Heart left ventricle (tissue), 16 donors: ENCODE measurements at regions of chr17 and their contacts with region 1.

Region 1: GRCh38 chr17:30600049-30600829 is 123.0 kb downstream of the GOSR1 start:
- DNase-seq: peak; percentile 84 to 91 (median 88)
- ATAC-seq: peak; percentile 95 to 99 (median 99)
- H3K4me3 ChIP-seq: peak overlapping the region; percentile 72 to 95 (median 84)
- H3K27ac ChIP-seq: peak overlapping the region; percentile 81 to 99 (median 96)
- H3K4me1 ChIP-seq: peaks cover 0 to 18% (median 6%) of the 10 kb centered on the region in 12 donors
- H3K27me3 ChIP-seq: no peaks in the 10 kb centered on the region
- CTCF ChIP-seq: peak in 11 of 12 donors; percentile 18 to 62 (median 40)
- POLR2A ChIP-seq: peak in 1 of 2 donors; percentile 73

Region 2: DNA sequence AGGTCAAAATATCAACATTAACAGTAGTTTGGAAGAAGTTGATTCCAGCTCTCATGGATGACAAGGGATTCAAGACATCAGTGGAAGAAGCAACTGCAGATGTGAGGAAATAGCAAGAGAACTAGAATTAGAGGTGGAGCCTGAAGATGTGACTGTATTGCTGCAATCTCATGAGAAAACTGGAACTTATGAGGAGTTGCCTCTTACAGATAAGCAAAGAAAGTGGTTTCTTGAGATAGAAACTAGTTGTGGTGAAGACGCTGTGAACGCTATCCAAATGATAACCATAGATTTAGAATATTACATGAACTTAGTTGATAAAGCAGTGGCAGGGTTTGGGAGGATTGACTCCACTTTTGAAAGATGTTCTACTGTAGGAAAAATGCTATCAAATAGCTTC is 55.2 kb before region 1 on chr17:
- intact Hi-C with region 1: no loop called
- DNase-seq: no peak
- ATAC-seq: no peak
- H3K4me3 ChIP-seq: no peak overlapping the region
- H3K27ac ChIP-seq: no peak overlapping the region
- H3K4me1 ChIP-seq: no peaks in the 10 kb centered on the region
- H3K27me3 ChIP-seq: no peaks in the 10 kb centered on the region
- CTCF ChIP-seq: no peak
- POLR2A ChIP-seq: no peak

Region 3: DNA sequence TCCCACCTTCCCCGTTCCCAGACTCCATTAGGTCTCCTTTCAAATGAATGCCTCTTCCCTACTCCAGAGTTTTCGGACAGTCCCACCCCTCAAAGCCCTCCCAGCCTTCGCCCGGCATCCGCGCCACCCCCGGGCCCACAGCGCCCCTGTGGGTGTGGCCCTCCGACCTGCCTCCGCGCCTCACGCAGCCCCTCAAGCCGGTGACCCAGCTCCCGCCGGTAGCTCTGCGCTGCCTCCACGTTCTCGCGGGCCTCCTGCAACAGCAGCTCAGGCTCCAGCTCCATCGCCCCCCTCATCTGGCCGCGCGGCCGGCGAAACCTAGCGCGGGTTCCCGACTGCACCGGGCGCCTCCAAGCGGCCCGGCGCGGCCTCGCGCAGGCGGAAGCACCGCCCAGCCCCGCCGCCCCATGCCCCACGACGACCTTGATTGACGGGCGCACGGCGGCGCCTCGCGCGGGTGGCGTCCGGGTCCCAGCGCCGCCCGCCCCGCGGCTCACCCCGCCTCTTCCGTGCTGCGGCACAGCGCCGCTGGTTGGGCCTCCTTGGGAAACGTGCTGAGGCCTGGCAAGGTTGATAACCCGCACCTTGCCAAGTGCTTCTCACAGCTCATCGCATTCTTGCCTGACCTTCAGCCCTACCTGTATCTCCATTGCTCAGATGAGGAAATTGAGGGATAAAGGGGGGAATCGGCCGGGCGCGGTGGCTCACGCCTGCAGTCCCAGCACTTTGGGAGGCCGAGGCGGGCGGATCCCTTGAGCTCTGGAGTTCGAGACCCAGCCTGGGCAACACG is 224.3 kb after region 1 on chr17 and contains the start of gene CRLF3:
- intact Hi-C with region 1: loop called in 1 of 10 experiments (anchors 5 kb)
- DNase-seq: peak; percentile 90 to 95 (median 92)
- ATAC-seq: peak; percentile 91 to 99 (median 98)
- H3K4me3 ChIP-seq: peak within 1 kb of the TSS; percentile 68 to 99 (median 93)
- H3K27ac ChIP-seq: peak within 1 kb of the TSS in 11 of 12 donors; percentile 78 to 93 (median 85)
- H3K4me1 ChIP-seq: peaks cover 0 to 54% (median 19%) of the 10 kb centered on the region in 12 donors
- H3K27me3 ChIP-seq: no peaks in the 10 kb centered on the region
- CTCF ChIP-seq: peak; percentile 32 to 90 (median 68)
- POLR2A ChIP-seq: peak in 1 of 2 donors; percentile 84
- total RNA-seq, gene CRLF3: 4.4 to 12.3 (median 5.5) TPM